ENCODE measurements at regions of chr1 and their contacts with region 1.

Region 1: DNA sequence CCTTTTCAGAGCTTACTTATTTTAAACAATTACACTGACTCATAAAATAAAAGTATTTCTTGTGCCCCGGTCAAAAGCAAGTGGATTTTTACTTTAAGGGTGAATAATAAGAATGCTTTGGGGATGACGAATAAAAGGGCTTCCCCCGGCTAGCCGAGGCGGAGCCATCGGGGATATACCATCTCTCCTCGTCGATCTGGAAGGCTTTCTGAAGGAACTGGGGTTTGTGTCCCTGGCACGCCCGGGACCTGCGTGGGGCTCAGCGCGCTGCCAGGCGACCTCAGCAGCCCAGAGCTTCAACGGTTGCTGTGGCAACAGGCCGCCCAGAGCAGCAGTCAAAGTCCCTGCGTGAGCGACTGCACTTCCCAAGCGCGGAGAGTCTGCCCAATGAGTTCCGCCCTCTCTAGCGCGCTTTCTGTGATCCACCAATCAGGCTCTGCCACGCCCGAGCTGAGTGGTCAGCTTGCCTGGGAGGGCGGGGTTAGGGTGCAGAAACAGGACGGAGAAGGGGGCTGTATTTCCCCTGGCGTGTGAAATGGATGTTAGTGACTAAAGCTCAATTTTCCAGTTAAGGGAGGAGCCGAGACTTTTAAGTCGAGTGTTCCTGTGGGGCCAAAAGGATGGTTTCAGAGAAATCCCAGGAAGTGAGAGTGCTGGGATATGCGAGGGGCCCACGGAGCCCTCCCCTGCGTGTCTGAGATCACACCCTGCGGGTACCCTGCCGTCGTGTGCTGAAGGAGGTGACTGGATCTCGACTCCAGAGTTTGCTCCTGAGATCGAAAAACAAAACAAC is 33.0 kb upstream of the MGST3 start:
- DNase-seq: peak; percentile 74 to 92 (median 83)
- ATAC-seq: peak; percentile 97 to 98 (median 98)
- H3K4me3 ChIP-seq: peak overlapping the region; percentile 67 to 76
- H3K4me3 Mint-ChIP-seq: peak overlapping the region; percentile 85 to 88 (median 87)
- H3K27ac ChIP-seq: peak overlapping the region; percentile 52
- H3K27ac Mint-ChIP-seq: peak overlapping the region in 1 of 2 donors; percentile 57
- H3K4me1 ChIP-seq: peaks cover 9 to 19% of the 10 kb centered on the region in 2 experiments
- H3K4me1 Mint-ChIP-seq: peaks cover 22 to 32% (median 30%) of the 10 kb centered on the region in 3 donors
- H3K27me3 ChIP-seq: peaks cover 4 to 14% of the 10 kb centered on the region in 2 experiments
- H3K27me3 Mint-ChIP-seq: peaks cover 33 to 38% of the 10 kb centered on the region in 2 donors

Region 2: DNA sequence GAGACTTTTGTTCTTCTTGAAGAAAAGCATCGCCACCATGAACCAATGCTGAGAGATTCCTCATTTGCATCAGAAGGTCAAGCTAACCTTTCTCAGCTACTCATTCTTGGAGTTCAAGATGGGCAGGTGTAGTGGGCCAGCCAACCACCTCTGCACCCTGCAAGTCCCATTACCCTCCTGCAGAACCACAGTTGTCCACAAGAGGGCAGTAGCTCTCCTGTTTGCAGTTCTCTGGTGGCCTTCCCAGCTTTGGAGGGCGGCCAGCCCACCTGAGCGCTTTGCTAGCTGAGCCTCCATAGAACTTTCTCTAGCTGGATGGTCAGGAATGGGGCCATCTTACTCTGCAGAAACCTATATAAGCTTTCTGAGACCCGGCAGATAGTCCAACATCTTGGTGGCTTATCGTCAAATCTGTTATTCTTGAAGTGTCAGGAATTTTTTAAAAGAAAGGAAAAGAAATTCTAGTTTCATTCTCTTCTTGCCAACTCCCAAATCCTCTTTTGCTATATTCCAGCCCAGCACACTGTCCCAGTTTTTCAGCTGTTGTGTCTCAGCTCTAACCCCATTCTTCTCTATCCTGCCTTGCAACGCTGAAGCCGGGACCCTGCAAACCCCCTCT is 230.6 kb before region 1 on chr1:
- CTCF ChIA-PET with region 1: interaction called, 7 to 22 read pairs
- POLR2A ChIA-PET with region 1: no interaction called
- DNase-seq: peak in 34 of 35 experiments; percentile 10 to 84 (median 62)
- ATAC-seq: peak; percentile 62 to 73 (median 66)
- H3K4me3 ChIP-seq: no peak overlapping the region
- H3K4me3 Mint-ChIP-seq: no peak overlapping the region
- H3K27ac ChIP-seq: no peak overlapping the region
- H3K27ac Mint-ChIP-seq: no peak overlapping the region
- H3K4me1 ChIP-seq: peaks cover 0 to 4% of the 10 kb centered on the region in 2 experiments
- H3K4me1 Mint-ChIP-seq: peaks cover 0 to 2% (median 0%) of the 10 kb centered on the region in 3 donors
- H3K27me3 ChIP-seq: peaks cover 5 to 40% of the 10 kb centered on the region in 2 experiments
- H3K27me3 Mint-ChIP-seq: peaks cover 62 to 68% of the 10 kb centered on the region in 2 donors

Region 3: GRCh38 chr1:165403835-165404482 is 194.1 kb before region 1 on chr1:
- CTCF ChIA-PET with region 1: interaction called in 1 of 2 experiments, 16 read pairs
- POLR2A ChIA-PET with region 1: no interaction called
- DNase-seq: peak in 14 of 35 experiments; percentile 6 to 48 (median 14)
- ATAC-seq: peak in 3 of 4 experiments; percentile 56 to 71 (median 60)
- H3K4me3 ChIP-seq: no peak overlapping the region
- H3K4me3 Mint-ChIP-seq: no peak overlapping the region
- H3K27ac ChIP-seq: no peak overlapping the region
- H3K27ac Mint-ChIP-seq: no peak overlapping the region
- H3K4me1 ChIP-seq: no peaks in the 10 kb centered on the region
- H3K4me1 Mint-ChIP-seq: peaks cover 2 to 5% (median 2%) of the 10 kb centered on the region in 3 donors
- H3K27me3 ChIP-seq: peaks cover 13 to 32% of the 10 kb centered on the region in 2 experiments
- H3K27me3 Mint-ChIP-seq: peaks cover 28 to 36% of the 10 kb centered on the region in 2 donors

Region 4: DNA sequence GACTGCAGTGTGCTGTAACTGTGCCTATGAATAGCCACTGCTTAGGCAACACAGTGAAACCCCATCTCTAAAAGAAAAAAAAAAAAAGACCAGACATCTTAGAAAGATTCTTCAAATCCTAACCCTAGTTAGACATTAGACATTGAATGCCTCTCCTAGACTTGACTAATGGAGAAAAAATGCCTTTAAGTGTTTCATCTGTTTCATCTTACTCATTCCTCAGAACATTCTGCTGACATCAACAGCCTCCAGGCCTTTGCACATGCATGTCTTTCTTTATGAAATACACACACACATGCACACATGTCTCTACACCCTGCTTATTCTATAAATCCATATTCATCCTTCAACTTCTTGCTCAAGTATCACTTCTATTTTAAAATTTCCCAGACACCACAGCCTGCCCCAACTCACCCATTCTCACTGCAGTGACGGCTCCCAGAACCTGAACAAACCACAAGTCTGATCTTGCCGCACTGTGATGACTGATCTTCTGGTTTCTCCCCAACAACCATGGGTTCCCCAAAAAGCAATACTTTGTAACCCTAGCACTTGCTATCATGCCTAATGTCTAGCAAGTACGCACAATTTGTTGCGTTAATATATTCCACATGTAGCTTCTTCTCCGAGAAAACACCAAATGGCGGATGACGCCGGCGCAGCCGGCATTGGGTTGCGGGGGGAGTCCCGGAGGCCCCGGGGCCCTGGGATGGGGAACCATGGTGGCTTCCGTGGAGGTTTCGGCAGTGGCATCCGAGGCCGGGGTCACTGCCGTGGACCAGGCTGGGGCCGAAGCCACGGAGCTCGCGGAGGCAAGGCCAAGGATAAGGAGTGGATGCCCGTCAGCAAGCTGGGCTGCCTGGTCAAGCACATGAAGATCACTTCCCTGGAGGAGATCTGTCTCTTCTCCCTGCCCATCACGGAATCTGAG is 16.9 kb before region 1 on chr1:
- CTCF ChIA-PET with region 1: interaction called, 5 to 12 read pairs
- POLR2A ChIA-PET with region 1: no interaction called
- DNase-seq: no peak
- ATAC-seq: no peak
- H3K4me3 ChIP-seq: no peak overlapping the region
- H3K4me3 Mint-ChIP-seq: no peak overlapping the region
- H3K27ac ChIP-seq: no peak overlapping the region
- H3K27ac Mint-ChIP-seq: no peak overlapping the region
- H3K4me1 ChIP-seq: no peaks in the 10 kb centered on the region
- H3K4me1 Mint-ChIP-seq: no peaks in the 10 kb centered on the region
- H3K27me3 ChIP-seq: peaks cover 2 to 14% of the 10 kb centered on the region in 2 experiments
- H3K27me3 Mint-ChIP-seq: peaks cover 16 to 23% of the 10 kb centered on the region in 2 donors

Region 5: DNA sequence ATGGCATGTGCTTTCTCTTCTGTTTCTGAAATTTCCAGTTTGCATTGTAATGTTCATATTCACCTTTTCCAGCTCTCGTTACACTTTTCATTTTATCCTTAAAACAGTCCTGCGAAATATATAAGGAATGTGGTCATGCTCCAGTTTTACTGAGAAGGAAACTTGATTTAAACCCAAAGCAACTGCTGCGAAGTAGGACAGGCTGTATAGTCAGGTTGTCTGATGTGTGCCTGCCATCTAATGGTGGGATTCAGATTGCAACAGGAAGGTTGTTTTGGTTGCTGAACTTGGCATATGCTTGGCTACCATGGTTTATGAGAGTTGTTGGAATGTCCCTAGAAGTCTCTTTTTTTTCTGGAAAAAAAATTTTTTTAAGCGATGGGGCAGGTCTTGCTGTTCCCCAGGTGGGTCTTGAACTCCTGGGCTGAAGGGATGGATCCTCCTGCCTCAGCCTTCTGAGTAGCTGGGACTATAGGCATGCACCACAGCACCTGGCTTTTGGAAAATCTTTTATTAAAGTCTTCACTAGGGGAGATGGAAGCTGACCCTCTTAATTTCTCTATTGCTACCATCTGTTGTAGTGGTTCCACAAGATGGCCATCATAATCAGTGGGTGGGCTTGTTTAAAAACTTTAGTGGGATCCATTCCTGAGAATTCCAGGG is 316.2 kb after region 1 on chr1:
- CTCF ChIA-PET with region 1: interaction called, 20 to 68 read pairs
- POLR2A ChIA-PET with region 1: no interaction called
- DNase-seq: peak; percentile 16 to 86 (median 55)
- ATAC-seq: peak; percentile 85 to 93 (median 88)
- H3K4me3 ChIP-seq: no peak overlapping the region
- H3K4me3 Mint-ChIP-seq: no peak overlapping the region
- H3K27ac ChIP-seq: no peak overlapping the region
- H3K27ac Mint-ChIP-seq: no peak overlapping the region
- H3K4me1 ChIP-seq: no peaks in the 10 kb centered on the region
- H3K4me1 Mint-ChIP-seq: peaks cover 0 to 4% (median 2%) of the 10 kb centered on the region in 3 donors
- H3K27me3 ChIP-seq: no peaks in the 10 kb centered on the region
- H3K27me3 Mint-ChIP-seq: no peaks in the 10 kb centered on the region